Aorta (tissue), 5 donors: ENCODE measurements at regions of chr9 and their contacts with region 1.

Region 1: GRCh38 chr9:91549177-91549576 is 125.5 kb upstream of the NFIL3 start:
- DNase-seq: no peak
- ATAC-seq: no peak
- H3K4me3 ChIP-seq: no peak overlapping the region
- H3K27ac ChIP-seq: no peak overlapping the region
- H3K4me1 ChIP-seq: no peaks in the 10 kb centered on the region
- H3K27me3 ChIP-seq: no peaks in the 10 kb centered on the region

Region 2: GRCh38 chr9:91483189-91483691 is 65.9 kb before region 1 on chr9:
- intact Hi-C with region 1: loop called in 1 of 2 experiments (anchors 2 kb)
- DNase-seq: peak in 1 of 2 donors; percentile 76
- ATAC-seq: peak; percentile 83
- H3K4me3 ChIP-seq: no peak overlapping the region
- H3K27ac ChIP-seq: peak overlapping the region; percentile 6 to 73
- H3K4me1 ChIP-seq: peaks cover 0 to 4% of the 10 kb centered on the region in 2 donors
- H3K27me3 ChIP-seq: no peaks in the 10 kb centered on the region

Region 3: DNA sequence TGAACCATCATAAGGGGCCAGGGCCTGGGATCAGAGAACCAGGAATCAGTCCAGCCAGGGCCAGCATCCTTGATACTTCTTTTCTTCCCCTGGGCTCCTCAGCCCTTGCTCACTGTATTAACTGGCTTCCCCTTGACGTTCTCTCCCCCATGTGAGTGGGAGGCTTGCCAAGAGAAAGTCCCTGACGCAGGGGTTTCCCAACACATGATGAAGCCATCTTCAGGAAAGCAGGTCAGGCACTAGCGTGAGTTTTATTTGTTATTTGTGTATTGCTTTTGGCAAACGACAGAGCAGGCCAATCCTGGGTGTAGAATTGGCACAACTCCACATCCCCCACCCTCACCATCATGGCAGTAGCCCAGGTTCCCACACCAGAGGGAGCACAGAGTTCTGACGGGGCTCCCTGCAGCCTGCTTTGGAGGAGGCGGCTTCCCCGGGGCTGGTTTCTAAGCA is 40.0 kb after region 1 on chr9:
- intact Hi-C with region 1: no loop called
- DNase-seq: no peak
- ATAC-seq: peak; percentile 46
- H3K4me3 ChIP-seq: no peak overlapping the region
- H3K27ac ChIP-seq: no peak overlapping the region
- H3K4me1 ChIP-seq: no peaks in the 10 kb centered on the region
- H3K27me3 ChIP-seq: no peaks in the 10 kb centered on the region